Sigmoid colon (tissue), 7 donors: ENCODE measurements at regions of chr5 and their contacts with region 1.

Region 1: GRCh38 chr5:172932313-172933017 is 26.8 kb upstream of the RPL26L1 start:
- DNase-seq: peak; percentile 91
- H3K4me3 ChIP-seq: no peak overlapping the region
- H3K27ac ChIP-seq: peak overlapping the region; percentile 47 to 78 (median 61)
- H3K4me1 ChIP-seq: peaks cover 0 to 21% (median 16%) of the 10 kb centered on the region in 4 donors
- H3K27me3 ChIP-seq: no peaks in the 10 kb centered on the region
- CTCF ChIP-seq: peak; percentile 90 to 99 (median 94)
- EP300 ChIP-seq: no peak
- POLR2A ChIP-seq: no peak

Region 2: DNA sequence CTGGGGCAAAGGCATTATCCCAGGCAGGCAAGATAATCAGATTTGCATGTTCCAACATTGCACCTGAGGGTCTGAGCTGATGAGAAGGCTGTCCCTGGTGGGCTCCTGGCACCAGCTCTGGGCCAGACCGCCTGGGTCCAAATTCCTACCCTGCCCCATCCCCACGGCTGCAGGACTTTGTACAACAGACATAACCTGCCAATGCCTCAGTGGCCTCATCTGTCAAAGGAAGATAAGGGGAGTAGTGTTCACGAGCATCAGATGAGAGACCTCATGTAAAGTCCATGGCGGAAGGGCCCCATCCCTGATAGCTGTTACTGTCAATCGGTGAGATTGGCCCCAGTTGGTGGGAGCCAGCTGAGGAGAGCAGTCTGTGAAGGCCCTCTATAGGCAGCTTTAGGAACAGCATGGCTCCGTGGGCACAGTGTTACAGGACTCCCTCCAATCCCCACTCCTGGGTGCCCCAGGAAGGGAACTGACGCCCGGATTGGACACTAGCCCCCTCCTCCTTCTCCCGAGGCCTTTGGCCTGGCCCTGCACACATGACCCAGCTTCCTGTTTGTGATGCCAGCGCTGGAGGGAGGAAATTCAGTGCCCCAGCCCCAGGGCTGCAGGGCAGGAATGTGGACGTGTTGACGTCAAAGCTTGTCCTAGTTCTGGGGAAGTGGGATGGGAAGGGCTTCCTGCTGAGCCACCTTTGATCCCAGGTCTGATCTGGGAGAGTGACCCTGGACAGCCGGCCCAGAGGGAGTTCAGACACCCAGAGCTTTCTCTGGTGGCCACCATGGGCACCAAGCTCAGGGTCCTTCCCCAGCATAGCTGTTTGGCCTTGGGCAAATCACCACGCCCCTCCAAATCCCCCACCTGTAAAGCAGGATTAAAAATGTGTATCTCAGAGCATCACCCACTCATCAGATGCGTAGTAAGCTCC is 217.7 kb before region 1 on chr5:
- intact Hi-C with region 1: loop called (anchors 1 kb)
- DNase-seq: peak; percentile 92
- H3K4me3 ChIP-seq: no peak overlapping the region
- H3K27ac ChIP-seq: peak overlapping the region; percentile 52 to 77 (median 64)
- H3K4me1 ChIP-seq: peaks cover 0 to 40% (median 20%) of the 10 kb centered on the region in 4 donors
- H3K27me3 ChIP-seq: peaks cover 0 to 5% (median 0%) of the 10 kb centered on the region in 3 donors
- CTCF ChIP-seq: peak; percentile 59 to 85 (median 84)
- EP300 ChIP-seq: peak in 2 of 4 donors; percentile 72 to 74
- POLR2A ChIP-seq: no peak